ENCODE measurements at regions of chr1 and their contacts with region 1.

Region 1: GRCh38 chr1:160539990-160540858 is 17.2 kb upstream of the SLAMF6 start:
- DNase-seq: peak; percentile 99 to 100 (median 99)
- H3K4me3 ChIP-seq: peak overlapping the region in 5 of 7 experiments; percentile 5 to 59 (median 16)
- H3K27ac ChIP-seq: peak overlapping the region; percentile 62 to 91
- H3K4me1 ChIP-seq: peaks cover 31 to 52% (median 42%) of the 10 kb centered on the region in 4 experiments
- H3K27me3 ChIP-seq: no peaks in the 10 kb centered on the region

Region 2: GRCh38 chr1:160428655-160429054 is 111.6 kb before region 1 on chr1:
- CTCF ChIA-PET with region 1: interaction called, 15 read pairs
- POLR2A ChIA-PET with region 1: no interaction called
- DNase-seq: peak in 2 of 3 donors; percentile 33 to 34
- H3K4me3 ChIP-seq: no peak overlapping the region
- H3K27ac ChIP-seq: no peak overlapping the region
- H3K4me1 ChIP-seq: peaks cover 0 to 32% (median 18%) of the 10 kb centered on the region in 4 experiments
- H3K27me3 ChIP-seq: no peaks in the 10 kb centered on the region

Region 3: DNA sequence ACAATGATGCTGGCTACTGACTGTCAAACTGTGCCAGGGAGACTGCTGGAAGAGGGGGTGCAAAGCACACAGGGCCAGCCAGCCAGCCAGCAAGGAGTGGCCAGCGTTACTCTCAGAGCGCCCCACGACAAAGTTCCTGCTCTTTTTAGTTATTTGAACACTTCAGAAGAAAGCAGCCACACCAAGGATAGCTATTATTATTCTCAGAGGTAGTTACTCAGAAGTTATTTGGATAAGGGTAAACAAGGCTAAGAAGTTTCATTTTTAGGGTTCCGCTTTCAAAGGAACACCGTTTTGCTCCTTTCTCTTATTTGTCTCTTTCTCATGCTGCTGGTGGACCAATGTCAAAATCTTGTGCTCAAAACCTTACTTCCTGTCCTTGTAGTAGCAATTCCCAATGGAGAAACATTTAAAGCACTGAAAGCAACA is 80.0 kb before region 1 on chr1:
- CTCF ChIA-PET with region 1: no interaction called
- POLR2A ChIA-PET with region 1: no interaction called
- DNase-seq: no peak
- H3K4me3 ChIP-seq: peak overlapping the region in 1 of 7 experiments; percentile 3
- H3K27ac ChIP-seq: no peak overlapping the region
- H3K4me1 ChIP-seq: peaks cover 0 to 11% (median 6%) of the 10 kb centered on the region in 4 experiments
- H3K27me3 ChIP-seq: no peaks in the 10 kb centered on the region

Region 4: DNA sequence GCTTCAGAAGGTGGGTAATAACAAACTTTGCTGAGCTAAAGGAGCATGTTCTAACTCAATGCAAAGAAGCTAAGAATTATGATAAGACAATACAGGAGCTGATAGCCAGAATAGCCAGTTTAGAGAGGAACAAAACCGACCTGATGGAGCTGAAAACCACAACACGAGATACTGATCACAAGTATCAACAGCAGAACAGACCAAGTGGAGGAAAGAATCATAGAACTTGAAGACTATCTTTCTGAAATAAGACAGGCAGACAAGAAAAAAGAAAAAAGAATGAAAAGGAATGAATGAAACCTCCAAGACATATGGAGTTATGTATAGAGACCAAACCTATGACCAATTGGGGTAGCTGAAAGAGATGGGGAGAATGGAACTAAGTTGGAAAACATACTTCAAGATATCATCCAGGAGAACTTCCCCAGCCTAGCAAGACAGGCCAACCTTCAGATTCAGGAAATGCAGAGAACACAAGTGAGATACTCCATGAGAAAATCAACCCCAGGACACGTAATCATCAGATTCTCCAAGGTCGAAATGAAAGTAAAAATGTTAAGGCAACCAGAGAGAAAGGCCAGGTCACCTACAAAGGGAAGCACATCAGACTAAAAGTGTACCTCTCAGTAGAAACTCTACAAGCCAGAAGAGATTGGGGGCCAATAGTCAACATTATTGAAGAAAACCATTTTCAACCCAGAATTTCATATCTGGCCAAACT is 18.6 kb after region 1 on chr1:
- CTCF ChIA-PET with region 1: interaction called, 13 read pairs
- POLR2A ChIA-PET with region 1: no interaction called
- DNase-seq: no peak
- H3K4me3 ChIP-seq: no peak overlapping the region
- H3K27ac ChIP-seq: no peak overlapping the region
- H3K4me1 ChIP-seq: peaks cover 0 to 3% (median 0%) of the 10 kb centered on the region in 4 experiments
- H3K27me3 ChIP-seq: peaks cover 0 to 5% (median 0%) of the 10 kb centered on the region in 5 experiments